Heart left ventricle (tissue), 16 donors: ENCODE measurements at regions of chr11 and their contacts with region 1.

Region 1: DNA sequence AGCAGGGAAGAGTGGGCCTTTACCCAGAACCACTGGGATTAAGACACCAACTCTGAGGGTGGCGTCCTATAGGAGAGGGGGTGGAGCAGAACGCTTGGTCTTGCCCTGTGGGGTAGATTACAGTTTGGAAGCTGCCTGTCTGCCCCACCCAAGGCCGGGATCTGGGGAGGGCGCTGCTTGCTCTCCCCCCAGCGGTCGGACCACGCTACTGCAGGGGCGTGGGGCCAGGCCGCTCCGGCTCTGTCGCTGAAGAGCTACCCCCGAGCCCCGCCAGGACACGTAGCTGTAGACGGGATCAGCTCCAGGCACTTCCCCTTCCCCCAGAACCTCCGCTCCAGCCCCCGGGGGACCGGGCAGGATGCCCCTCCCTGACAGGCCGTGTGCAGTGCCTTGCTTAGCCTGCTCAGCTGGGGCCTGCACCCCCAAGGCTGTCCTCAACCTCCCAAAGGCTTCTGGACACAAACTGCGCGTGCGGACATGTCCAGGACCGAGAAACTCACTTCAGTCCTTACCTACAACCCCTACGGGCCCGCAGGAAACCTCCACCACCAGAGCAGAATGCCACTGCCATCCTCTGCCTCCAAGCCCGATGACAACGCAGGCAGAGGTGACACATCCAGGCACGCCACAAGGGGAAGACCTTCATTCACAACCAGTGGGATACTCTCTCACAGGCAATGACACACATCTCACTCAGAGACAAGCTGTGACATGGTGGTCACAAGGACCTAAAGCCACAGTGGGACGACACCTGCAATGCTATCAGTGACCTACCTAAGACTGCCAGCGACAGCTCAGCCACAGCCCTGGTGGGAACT is 3.6 kb downstream of the AHNAK start:
- DNase-seq: peak; percentile 86 to 93 (median 89)
- ATAC-seq: peak; percentile 32 to 61 (median 46)
- H3K4me3 ChIP-seq: peak overlapping the region; percentile 71 to 100 (median 98)
- H3K27ac ChIP-seq: peak overlapping the region; percentile 94 to 100 (median 99)
- H3K4me1 ChIP-seq: peaks cover 42 to 84% (median 69%) of the 10 kb centered on the region in 12 donors
- H3K27me3 ChIP-seq: no peaks in the 10 kb centered on the region
- CTCF ChIP-seq: peak; percentile 97 to 100 (median 99)
- POLR2A ChIP-seq: no peak

Region 2: DNA sequence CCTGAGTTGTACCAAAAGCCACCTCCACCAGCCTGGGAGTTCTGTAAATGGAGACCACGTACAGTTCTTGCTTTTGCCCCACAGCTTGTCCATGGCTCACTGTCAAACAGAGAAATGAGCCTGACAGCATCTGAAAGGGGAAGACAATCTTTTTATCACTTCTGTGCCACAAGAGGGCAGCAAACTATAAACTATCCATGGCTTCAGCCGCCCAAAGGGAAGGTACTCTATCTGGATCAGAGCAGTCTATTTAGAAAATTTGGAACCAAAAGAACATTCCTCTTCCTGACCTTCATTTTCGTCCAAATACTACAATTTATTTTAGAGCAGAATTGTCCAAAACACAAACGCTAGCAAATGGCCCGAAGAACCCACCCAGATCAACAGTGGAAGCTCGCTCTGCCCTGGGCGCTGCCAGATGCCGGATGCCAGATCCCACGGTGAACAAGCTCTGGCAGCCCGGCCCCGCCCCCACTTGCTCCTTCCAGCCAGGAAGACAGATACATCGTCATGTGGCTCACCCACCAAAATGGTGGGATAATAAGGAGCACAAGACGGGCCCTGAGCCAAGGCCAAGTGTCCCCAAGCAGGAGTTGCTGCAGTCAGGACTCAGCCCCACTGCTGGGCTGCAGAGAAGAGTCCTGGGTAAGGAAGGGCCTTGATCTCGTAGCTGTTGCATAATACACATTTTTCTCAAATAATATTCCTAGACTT is 148.0 kb before region 1 on chr11:
- intact Hi-C with region 1: loop called in 6 of 10 experiments (anchors 5 to 10 kb)
- DNase-seq: peak; percentile 78 to 88 (median 83)
- ATAC-seq: peak; percentile 71 to 84 (median 82)
- H3K4me3 ChIP-seq: peak overlapping the region in 11 of 12 donors; percentile 21 to 60 (median 45)
- H3K27ac ChIP-seq: peak overlapping the region in 11 of 12 donors; percentile 10 to 82 (median 67)
- H3K4me1 ChIP-seq: peaks cover 6 to 50% (median 36%) of the 10 kb centered on the region in 12 donors
- H3K27me3 ChIP-seq: no peaks in the 10 kb centered on the region
- CTCF ChIP-seq: peak; percentile 59 to 85 (median 74)
- POLR2A ChIP-seq: no peak

Region 3: GRCh38 chr11:62427630-62428233 is 115.2 kb before region 1 on chr11:
- intact Hi-C with region 1: loop called (anchors 1 to 5 kb)
- DNase-seq: no peak
- ATAC-seq: no peak
- H3K4me3 ChIP-seq: no peak overlapping the region
- H3K27ac ChIP-seq: peak overlapping the region in 2 of 12 donors; percentile 78 to 84
- H3K4me1 ChIP-seq: peaks cover 0 to 62% (median 3%) of the 10 kb centered on the region in 12 donors
- H3K27me3 ChIP-seq: no peaks in the 10 kb centered on the region
- CTCF ChIP-seq: no peak
- POLR2A ChIP-seq: no peak

Region 4: GRCh38 chr11:62508268-62509058 is 34.5 kb before region 1 on chr11:
- intact Hi-C with region 1: loop called in 9 of 10 experiments (anchors 1 to 5 kb)
- DNase-seq: peak; percentile 78 to 92 (median 85)
- ATAC-seq: peak; percentile 88 to 93 (median 90)
- H3K4me3 ChIP-seq: peak overlapping the region in 7 of 12 donors; percentile 1 to 20 (median 6)
- H3K27ac ChIP-seq: peak overlapping the region; percentile 59 to 88 (median 80)
- H3K4me1 ChIP-seq: peaks cover 0 to 64% (median 42%) of the 10 kb centered on the region in 12 donors
- H3K27me3 ChIP-seq: no peaks in the 10 kb centered on the region
- CTCF ChIP-seq: peak; percentile 20 to 67 (median 43)
- POLR2A ChIP-seq: no peak

Region 5: GRCh38 chr11:62573592-62574362 is 30.8 kb after region 1 on chr11 and contains the start of gene EEF1G:
- intact Hi-C with region 1: loop called in 1 of 10 experiments (anchors 2 kb)
- DNase-seq: peak; percentile 98 to 99 (median 99)
- ATAC-seq: peak; percentile 95 to 97 (median 96)
- H3K4me3 ChIP-seq: peak within 1 kb of the TSS; percentile 58 to 95 (median 76)
- H3K27ac ChIP-seq: peak within 1 kb of the TSS; percentile 61 to 98 (median 94)
- H3K4me1 ChIP-seq: peaks cover 7 to 72% (median 44%) of the 10 kb centered on the region in 12 donors
- H3K27me3 ChIP-seq: no peaks in the 10 kb centered on the region
- CTCF ChIP-seq: no peak
- POLR2A ChIP-seq: peak; percentile 33 to 95
- total RNA-seq, gene EEF1G: 799 to 1,135 (median 929) TPM